IMR-90 (cell line): ENCODE measurements at regions of chr16 and their contacts with region 1.

Region 1: GRCh38 chr16:68528686-68529379 is 10.3 kb upstream of the ZFP90 start:
- DNase-seq: peak; percentile 64
- ATAC-seq: peak; percentile 92
- H3K4me3 ChIP-seq: no peak overlapping the region
- H3K27ac ChIP-seq: no peak overlapping the region
- H3K4me1 ChIP-seq: 0 out of 2 replicates have a peak, but pooled peaks cover 3% of the 10 kb centered on the region
- H3K27me3 ChIP-seq: no peaks in the 10 kb centered on the region
- CTCF ChIP-seq: peak; percentile 96
- POLR2A ChIP-seq: no peak
- RAD21 ChIP-seq: peak; percentile 93

Region 2: DNA sequence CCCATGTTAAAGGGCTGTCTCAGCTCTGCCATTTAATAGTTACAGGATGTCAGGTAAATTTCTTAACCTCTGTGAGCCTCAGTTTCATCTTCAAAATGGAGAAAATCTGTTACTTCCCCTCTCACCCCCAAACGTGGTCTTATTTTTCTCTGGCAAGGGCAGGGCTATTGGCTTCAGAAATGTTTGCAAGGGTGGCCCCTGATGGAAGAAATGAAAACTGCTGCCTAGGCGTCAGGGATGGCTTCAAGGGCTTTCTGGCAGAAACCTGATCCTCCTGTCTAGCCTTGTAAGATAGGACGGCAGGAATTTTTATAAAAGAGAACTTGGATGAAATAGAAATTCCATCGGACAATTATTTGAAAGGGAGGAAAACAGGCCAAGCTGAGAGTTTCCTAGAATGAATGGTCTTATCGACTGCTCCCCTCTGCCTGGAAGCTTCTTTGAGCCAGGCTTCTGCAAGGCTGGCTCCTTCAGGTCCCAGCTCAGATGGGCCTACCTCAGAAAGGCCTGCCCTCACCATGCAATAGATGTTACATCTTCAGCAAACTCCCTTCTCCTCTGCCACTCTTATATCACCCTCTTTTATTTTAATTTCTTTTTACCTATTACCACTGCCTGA is 271.5 kb after region 1 on chr16:
- CTCF ChIA-PET with region 1: interaction called, 3 read pairs
- POLR2A ChIA-PET with region 1: no interaction called
- dilution Hi-C with region 1: no loop called
- in situ Hi-C with region 1: no loop called
- intact Hi-C with region 1: loop called (anchors 1 kb)
- DNase-seq: peak; percentile 83
- ATAC-seq: peak; percentile 97
- H3K4me3 ChIP-seq: no peak overlapping the region
- H3K27ac ChIP-seq: no peak overlapping the region
- H3K4me1 ChIP-seq: peaks cover 2% of the 10 kb centered on the region; the same call in 1 of the 2 replicates
- H3K27me3 ChIP-seq: peaks cover 6% of the 10 kb centered on the region
- CTCF ChIP-seq: peak; percentile 77
- POLR2A ChIP-seq: no peak
- RAD21 ChIP-seq: peak; percentile 61

Region 3: GRCh38 chr16:68843482-68844210 is 314.8 kb after region 1 on chr16 and contains the start of gene TANGO6:
- CTCF ChIA-PET with region 1: interaction called, 4 read pairs
- POLR2A ChIA-PET with region 1: no interaction called
- dilution Hi-C with region 1: no loop called
- in situ Hi-C with region 1: no loop called
- intact Hi-C with region 1: loop called (anchors 1 kb)
- DNase-seq: peak; percentile 68
- ATAC-seq: peak; percentile 95
- H3K4me3 ChIP-seq: peak within 1 kb of the TSS; percentile 89
- H3K27ac ChIP-seq: peak within 1 kb of the TSS; percentile 95
- H3K4me1 ChIP-seq: peaks cover 3% of the 10 kb centered on the region; the same call in 1 of the 2 replicates
- H3K27me3 ChIP-seq: no peaks in the 10 kb centered on the region
- CTCF ChIP-seq: peak; percentile 39
- POLR2A ChIP-seq: peak; percentile 71
- RAD21 ChIP-seq: peak; percentile 35; the same call in 1 of the 2 replicates
- total RNA-seq, gene TANGO6: 19.7 and 22.4 TPM in 2 replicates

Region 4: DNA sequence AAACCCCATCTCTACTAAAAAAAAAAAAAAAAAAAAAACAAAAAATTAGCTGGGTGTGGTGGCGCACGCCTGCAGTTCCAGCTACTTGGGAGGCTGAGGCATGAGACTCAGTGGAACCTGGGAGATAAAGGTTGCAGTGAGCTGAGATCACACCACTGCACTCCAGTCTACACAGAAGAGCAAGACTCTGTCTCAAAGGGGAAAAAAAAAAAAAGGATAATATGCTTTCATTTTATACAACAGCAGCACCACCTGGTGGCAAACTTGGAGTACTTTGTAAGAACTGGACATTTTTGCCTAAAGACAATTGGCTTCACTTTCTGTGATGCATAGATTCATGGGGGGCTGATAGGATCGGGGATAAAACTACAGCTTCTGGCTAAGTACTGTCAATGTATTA is 595.1 kb after region 1 on chr16:
- CTCF ChIA-PET with region 1: no interaction called
- POLR2A ChIA-PET with region 1: no interaction called
- dilution Hi-C with region 1: no loop called
- in situ Hi-C with region 1: loop called (anchors 5 kb)
- intact Hi-C with region 1: loop called (anchors 1 kb)
- DNase-seq: peak; percentile 76
- ATAC-seq: peak; percentile 81
- H3K4me3 ChIP-seq: no peak overlapping the region
- H3K27ac ChIP-seq: no peak overlapping the region
- H3K4me1 ChIP-seq: no peaks in the 10 kb centered on the region
- H3K27me3 ChIP-seq: no peaks in the 10 kb centered on the region
- CTCF ChIP-seq: peak; percentile 81
- POLR2A ChIP-seq: 0 out of 2 replicates have a peak, but pooled peaks have one; percentile 30
- RAD21 ChIP-seq: peak; percentile 86